Right cardiac atrium (tissue), 5 donors: ENCODE measurements at regions of chr2 and their contacts with region 1.

Region 1: DNA sequence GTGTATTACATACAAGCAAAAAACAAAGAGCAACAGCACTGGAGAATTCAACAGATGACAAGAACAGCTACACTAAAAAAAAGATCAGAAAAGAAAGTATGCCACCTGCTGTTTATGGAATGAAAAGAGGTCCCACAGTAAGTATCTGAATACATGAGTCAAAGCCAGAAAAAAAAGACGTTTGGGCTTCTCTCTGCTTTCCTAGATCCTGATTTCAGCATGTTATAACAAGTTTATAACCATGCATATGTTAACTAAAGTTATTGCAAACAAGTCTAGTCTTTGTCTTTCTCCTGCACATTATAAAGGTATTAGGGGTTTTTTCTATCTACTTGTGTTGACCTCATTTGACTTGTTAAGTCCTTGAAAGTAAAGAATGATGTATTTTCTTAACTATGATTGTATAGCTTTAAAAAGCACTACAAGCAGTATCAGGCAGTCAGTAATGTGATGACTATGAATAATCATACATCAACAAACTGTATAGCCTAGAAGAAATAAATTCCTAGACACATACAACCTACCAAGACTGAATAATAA is 108.5 kb upstream of the COL5A2 start:
- DNase-seq: no peak
- ATAC-seq: peak; percentile 59 to 70
- H3K4me3 ChIP-seq: no peak overlapping the region
- H3K27ac ChIP-seq: no peak overlapping the region
- H3K4me1 ChIP-seq: no peaks in the 10 kb centered on the region
- H3K27me3 ChIP-seq: no peaks in the 10 kb centered on the region

Region 2: DNA sequence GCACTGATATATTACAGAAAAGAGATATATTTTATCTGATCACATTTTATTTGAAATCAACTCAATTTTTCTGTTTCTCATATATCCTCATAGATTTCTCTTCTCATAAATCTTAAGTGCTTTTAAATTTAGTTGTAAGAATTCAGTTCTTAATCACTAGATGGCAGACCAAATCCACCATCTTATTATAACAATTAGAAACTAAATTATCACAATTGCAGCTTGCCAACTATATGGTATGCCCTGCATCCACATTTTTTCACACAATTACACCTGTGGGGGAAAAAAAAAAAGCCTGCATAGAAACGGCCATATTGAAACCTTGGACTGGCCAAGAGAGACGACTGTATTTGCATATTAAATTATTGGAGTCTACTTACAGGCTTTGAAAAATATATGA is 172.9 kb before region 1 on chr2:
- intact Hi-C with region 1: loop called in 1 of 4 experiments (anchors 5 kb)
- DNase-seq: no peak
- ATAC-seq: no peak
- H3K4me3 ChIP-seq: no peak overlapping the region
- H3K27ac ChIP-seq: no peak overlapping the region
- H3K4me1 ChIP-seq: no peaks in the 10 kb centered on the region
- H3K27me3 ChIP-seq: no peaks in the 10 kb centered on the region